ENCODE measurements at regions of chr16 and their contacts with region 1.

Region 1: DNA sequence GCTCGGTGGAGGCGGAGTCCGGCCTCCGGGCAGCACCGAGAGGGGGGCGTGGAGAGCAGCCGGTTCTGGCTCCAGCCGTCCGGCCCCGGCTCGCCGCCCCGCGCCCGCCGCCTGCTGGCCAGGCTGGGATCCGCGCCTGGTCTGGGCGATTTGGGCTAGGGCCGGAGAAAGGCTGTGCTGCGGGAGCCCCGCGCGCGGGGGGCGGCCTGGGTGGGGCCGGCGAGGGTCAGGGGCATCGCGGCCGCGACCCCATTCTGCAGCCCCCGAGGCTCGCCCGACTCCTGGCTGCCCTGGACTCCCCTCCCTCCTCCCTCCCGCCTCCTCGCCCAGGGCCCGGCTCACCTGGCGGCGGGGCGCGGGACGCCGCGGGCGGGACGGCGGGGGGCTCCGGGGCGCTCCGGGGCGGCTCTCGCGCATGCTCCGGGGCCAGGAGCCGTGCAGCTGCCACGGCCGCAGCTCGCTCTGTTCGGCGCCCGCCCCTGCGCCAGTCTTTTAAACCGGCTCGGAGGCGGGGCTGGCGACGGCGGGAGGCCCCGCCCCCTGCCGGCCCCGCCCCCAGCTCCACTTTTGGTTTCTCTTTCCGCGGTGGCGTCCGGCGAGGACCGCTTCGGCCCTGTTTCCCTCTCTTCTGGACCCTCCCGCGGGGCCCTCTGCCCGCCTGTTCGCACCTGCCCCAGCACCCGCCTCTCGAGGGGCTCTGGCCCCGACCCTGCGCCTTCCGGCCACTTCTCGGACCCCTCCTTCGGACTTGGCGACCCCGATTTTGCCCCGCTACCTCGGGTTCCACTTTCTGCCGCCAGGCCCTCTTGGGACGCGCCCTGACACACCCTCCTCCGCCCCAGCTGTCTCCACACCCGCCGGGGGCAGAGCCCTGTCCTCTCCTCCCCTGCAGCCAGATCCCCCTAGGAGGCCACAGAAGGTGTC is at the start of gene SOCS1:
- DNase-seq: peak; percentile 83
- H3K4me3 ChIP-seq: peak within 1 kb of the TSS; percentile 68 to 80 (median 79)
- H3K27ac ChIP-seq: peak within 1 kb of the TSS; percentile 60
- H3K4me1 ChIP-seq: peaks cover 23% of the 10 kb centered on the region
- H3K27me3 ChIP-seq: no peaks in the 10 kb centered on the region
- CTCF ChIP-seq: peak; percentile 60 to 69
- total RNA-seq, gene SOCS1: 2.0 to 7.9 TPM

Region 2: GRCh38 chr16:11056090-11056992 is 199.7 kb before region 1 on chr16:
- CTCF ChIA-PET with region 1: interaction called, 3 read pairs
- dilution Hi-C with region 1: no loop called
- in situ Hi-C with region 1: no loop called
- intact Hi-C with region 1: loop called (anchors 2 kb)
- DNase-seq: no peak
- H3K4me3 ChIP-seq: no peak overlapping the region
- H3K27ac ChIP-seq: no peak overlapping the region
- H3K4me1 ChIP-seq: peaks cover 18% of the 10 kb centered on the region
- H3K27me3 ChIP-seq: no peaks in the 10 kb centered on the region
- CTCF ChIP-seq: no peak

Region 3: DNA sequence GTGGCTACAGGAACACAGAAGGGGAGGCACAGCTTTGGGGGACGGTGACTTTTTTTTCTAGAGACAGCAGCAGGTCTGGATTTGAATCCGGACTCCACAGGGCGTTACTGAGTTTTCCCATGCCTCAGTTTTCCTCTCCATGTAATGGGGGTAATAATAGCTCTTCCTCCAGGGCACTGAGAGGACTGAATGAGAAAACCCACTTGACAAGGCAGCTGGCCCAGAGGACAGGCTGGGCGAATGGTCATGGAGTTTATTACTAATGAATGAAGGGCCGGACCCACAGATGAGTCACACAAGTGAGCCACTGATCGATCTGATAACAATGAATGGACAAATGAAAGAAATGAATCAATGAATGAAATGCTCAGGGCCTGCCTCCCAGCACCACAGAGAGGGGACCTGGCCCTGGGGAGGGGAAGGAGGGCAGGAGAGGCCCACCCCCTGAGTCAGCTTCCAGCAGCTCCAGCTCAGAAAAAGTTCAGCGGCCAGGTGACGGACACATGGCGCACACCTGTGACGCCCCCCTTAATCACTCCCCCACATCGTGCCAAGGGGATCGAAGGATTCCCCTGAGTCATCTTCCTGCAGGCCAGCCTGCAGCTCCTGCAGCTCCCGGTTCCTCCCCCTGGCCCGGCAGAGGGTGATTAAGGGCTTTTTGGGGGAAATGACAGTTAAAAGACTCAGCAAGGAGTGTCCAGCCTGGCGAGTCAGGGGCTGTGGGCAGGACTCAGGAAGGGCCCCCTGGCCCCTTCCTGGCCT is 54.3 kb before region 1 on chr16:
- CTCF ChIA-PET with region 1: interaction called, 6 read pairs
- dilution Hi-C with region 1: no loop called
- in situ Hi-C with region 1: no loop called
- intact Hi-C with region 1: loop called (anchors 1 kb)
- DNase-seq: peak; percentile 98
- H3K4me3 ChIP-seq: peak overlapping the region in 1 of 3 experiments; percentile 2
- H3K27ac ChIP-seq: peak overlapping the region; percentile 92
- H3K4me1 ChIP-seq: peaks cover 47% of the 10 kb centered on the region
- H3K27me3 ChIP-seq: no peaks in the 10 kb centered on the region
- CTCF ChIP-seq: no peak

Region 4: GRCh38 chr16:11356573-11357331 is 100.8 kb after region 1 on chr16:
- CTCF ChIA-PET with region 1: no interaction called
- dilution Hi-C with region 1: no loop called
- in situ Hi-C with region 1: no loop called
- intact Hi-C with region 1: loop called (anchors 1 kb)
- DNase-seq: no peak
- H3K4me3 ChIP-seq: no peak overlapping the region
- H3K27ac ChIP-seq: peak overlapping the region; percentile 47
- H3K4me1 ChIP-seq: peaks cover 27% of the 10 kb centered on the region
- H3K27me3 ChIP-seq: no peaks in the 10 kb centered on the region
- CTCF ChIP-seq: peak; percentile 27 to 55